Caco-2 (cell line): ENCODE measurements at regions of chr7 and their contacts with region 1.

Region 1: DNA sequence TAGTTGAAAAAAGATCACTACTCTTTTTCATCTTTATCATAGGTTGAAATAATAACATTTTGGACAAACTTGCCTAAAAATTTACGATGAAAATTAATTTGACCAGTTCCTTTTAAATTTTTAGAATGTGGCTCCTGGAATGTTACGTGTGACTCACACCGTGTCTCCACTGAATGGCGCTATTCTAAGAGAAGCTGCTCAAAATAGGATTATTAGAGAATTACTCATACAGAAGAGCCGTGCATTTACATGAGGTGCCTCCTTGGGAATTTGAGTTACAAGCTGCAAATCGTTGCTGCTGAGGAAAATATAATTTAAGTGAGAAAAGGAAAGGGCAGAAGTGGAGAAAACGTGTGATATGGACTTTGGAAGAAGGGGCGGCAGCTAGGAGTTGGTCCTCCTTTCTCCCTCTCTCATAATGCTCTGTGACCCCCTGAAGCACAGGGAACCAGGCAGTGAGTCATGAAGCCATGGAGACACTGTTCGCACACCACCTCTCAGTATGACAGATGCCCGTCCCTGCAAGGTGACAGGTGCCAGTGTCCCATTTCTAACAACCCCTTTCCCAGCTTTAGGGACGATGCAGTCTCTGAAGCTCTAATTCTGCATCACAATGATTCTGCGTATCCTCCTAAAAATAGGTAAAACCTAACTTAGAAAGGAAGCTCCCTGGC is 323.2 kb upstream of the COBL start:
- DNase-seq: no peak
- H3K4me3 ChIP-seq: no peak overlapping the region
- H3K4me3 Mint-ChIP-seq: no peak overlapping the region
- H3K27ac Mint-ChIP-seq: no peak overlapping the region
- H3K4me1 ChIP-seq: peaks cover 39% of the 10 kb centered on the region
- H3K4me1 Mint-ChIP-seq: peaks cover 25% of the 10 kb centered on the region
- H3K27me3 ChIP-seq: no peaks in the 10 kb centered on the region; the same call in 1 of the 2 replicates
- H3K27me3 Mint-ChIP-seq: no peaks in the 10 kb centered on the region
- CTCF ChIP-seq: no peak

Region 2: GRCh38 chr7:51621961-51622360 is 17.8 kb before region 1 on chr7:
- CTCF ChIA-PET with region 1: no interaction called
- POLR2A ChIA-PET with region 1: no interaction called
- intact Hi-C with region 1: loop called (anchors 2 kb)
- DNase-seq: no peak
- H3K4me3 ChIP-seq: no peak overlapping the region
- H3K4me3 Mint-ChIP-seq: no peak overlapping the region
- H3K27ac Mint-ChIP-seq: no peak overlapping the region
- H3K4me1 ChIP-seq: peaks cover 41% of the 10 kb centered on the region
- H3K4me1 Mint-ChIP-seq: peaks cover 40% of the 10 kb centered on the region
- H3K27me3 ChIP-seq: no peaks in the 10 kb centered on the region
- H3K27me3 Mint-ChIP-seq: no peaks in the 10 kb centered on the region
- CTCF ChIP-seq: no peak

Region 3: DNA sequence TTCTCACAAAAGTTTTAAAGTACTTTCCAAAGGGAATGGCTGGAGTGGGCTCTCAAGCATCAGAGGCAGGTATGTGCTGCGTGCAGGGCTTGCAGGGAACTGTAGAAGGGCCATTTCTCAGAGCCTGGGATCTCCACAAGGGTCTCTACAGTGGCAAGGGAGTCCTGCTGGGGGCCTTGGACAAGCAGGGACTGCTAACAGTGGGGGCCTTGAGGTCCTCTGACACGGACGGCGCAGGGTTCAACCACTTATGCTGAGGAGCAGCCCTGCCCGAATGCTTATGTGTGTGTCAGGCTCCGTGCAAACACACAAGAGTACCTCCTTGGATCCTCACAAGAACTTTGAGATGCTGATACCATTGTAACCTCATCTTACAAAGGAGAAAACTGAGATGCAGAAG is 18.9 kb after region 1 on chr7:
- CTCF ChIA-PET with region 1: no interaction called
- POLR2A ChIA-PET with region 1: no interaction called
- intact Hi-C with region 1: no loop called
- DNase-seq: no peak
- H3K4me3 ChIP-seq: no peak overlapping the region
- H3K4me3 Mint-ChIP-seq: no peak overlapping the region
- H3K27ac Mint-ChIP-seq: no peak overlapping the region
- H3K4me1 ChIP-seq: no peaks in the 10 kb centered on the region
- H3K4me1 Mint-ChIP-seq: no peaks in the 10 kb centered on the region
- H3K27me3 ChIP-seq: no peaks in the 10 kb centered on the region; the same call in 1 of the 2 replicates
- H3K27me3 Mint-ChIP-seq: no peaks in the 10 kb centered on the region
- CTCF ChIP-seq: no peak